Prostate gland (tissue), 2 donors: ENCODE measurements at regions of chr1 and their contacts with region 1.

Region 1: GRCh38 chr1:166875734-166876539 is at the start of gene TADA1:
- DNase-seq: peak; percentile 99
- H3K4me3 ChIP-seq: peak within 1 kb of the TSS; percentile 59 to 87
- H3K27ac ChIP-seq: peak within 1 kb of the TSS; percentile 86 to 95
- H3K4me1 ChIP-seq: no peaks in the 10 kb centered on the region
- H3K27me3 ChIP-seq: no peaks in the 10 kb centered on the region
- CTCF ChIP-seq: peak in 3 of 4 experiments; percentile 42 to 59 (median 47)
- POLR2A ChIP-seq: peak; percentile 68
- total RNA-seq, gene TADA1: 14.2 to 19.5 TPM

Region 2: DNA sequence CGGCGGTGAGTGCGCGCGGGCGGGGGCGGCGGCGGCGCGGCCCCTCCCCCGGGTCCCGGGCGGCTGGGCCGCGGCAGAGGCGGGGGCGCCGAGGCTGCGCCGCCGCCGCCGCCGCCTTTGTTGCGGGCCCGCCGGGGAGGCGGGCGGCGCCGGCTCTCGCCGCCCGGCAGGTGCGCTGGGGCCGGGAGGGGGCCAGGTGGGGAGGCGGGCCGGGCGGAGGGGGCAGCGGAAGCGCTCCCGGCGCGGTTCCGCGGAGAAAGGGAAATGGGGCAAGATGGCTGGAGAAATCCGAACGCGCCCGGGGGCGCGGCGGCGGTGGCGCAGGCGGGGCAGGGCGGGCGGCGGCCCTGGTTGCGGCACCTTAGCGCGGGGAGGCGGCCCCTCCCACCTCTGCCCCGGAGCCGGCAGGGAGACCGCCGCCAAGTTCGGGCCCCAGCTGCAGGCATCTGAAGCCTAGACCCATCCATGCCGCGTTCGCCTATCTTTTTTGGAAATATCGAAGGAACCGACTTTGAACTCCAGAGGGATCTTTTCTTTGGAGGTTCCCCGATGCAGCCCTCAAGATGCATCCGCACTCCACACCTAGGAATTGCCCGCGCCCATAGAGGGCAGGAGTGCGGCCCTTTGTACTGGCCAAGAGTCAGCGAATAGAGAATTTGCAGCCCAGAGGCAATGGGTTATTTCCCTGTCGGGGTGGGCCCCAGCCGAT is 36.2 kb before region 1 on chr1:
- intact Hi-C with region 1: loop called (anchors 2 kb)
- DNase-seq: peak; percentile 42
- H3K4me3 ChIP-seq: peak overlapping the region; percentile 66 to 70
- H3K27ac ChIP-seq: peak overlapping the region; percentile 83 to 87
- H3K4me1 ChIP-seq: peaks cover 23% of the 10 kb centered on the region
- H3K27me3 ChIP-seq: no peaks in the 10 kb centered on the region
- CTCF ChIP-seq: peak in 1 of 4 experiments; percentile 12
- POLR2A ChIP-seq: no peak

Region 3: DNA sequence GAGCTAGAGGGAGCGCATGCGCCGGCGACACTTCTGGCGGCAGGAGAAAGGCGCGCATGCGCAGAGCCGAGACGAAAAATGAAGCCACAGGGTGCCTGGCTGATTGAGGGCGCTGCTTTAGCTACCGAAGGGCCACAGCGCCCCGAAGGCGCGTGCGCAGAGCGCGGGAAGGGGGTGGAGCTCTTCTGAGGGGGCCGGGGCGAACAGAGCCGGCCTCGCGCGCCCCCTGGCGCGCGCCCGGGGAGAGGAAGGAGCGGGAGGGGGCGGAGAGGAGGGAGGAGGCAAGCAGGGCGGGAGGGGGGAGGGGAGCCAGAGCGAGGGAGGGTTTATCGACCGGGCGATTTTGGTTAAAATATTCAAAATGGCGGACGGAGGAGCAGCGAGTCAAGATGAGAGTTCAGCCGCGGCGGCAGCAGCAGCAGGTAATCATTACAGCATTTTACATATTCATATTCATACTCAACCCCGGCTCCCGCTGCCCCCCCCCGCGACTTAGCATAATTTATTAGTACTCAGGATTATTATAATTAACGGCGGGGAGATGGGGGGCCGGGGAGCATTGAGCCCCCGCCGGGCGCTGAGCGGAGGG is 344.7 kb after region 1 on chr1 and contains the start of gene POU2F1:
- intact Hi-C with region 1: loop called (anchors 10 kb)
- DNase-seq: peak; percentile 97
- H3K4me3 ChIP-seq: peak within 1 kb of the TSS; percentile 86 to 91
- H3K27ac ChIP-seq: peak within 1 kb of the TSS; percentile 96 to 98
- H3K4me1 ChIP-seq: peaks cover 2% of the 10 kb centered on the region
- H3K27me3 ChIP-seq: no peaks in the 10 kb centered on the region
- CTCF ChIP-seq: peak; percentile 53 to 95 (median 92)
- POLR2A ChIP-seq: peak; percentile 77
- total RNA-seq, gene POU2F1: 10.9 to 26.6 TPM